A549 (cell line): ENCODE measurements at regions of chr2 and their contacts with region 1.

Region 1: DNA sequence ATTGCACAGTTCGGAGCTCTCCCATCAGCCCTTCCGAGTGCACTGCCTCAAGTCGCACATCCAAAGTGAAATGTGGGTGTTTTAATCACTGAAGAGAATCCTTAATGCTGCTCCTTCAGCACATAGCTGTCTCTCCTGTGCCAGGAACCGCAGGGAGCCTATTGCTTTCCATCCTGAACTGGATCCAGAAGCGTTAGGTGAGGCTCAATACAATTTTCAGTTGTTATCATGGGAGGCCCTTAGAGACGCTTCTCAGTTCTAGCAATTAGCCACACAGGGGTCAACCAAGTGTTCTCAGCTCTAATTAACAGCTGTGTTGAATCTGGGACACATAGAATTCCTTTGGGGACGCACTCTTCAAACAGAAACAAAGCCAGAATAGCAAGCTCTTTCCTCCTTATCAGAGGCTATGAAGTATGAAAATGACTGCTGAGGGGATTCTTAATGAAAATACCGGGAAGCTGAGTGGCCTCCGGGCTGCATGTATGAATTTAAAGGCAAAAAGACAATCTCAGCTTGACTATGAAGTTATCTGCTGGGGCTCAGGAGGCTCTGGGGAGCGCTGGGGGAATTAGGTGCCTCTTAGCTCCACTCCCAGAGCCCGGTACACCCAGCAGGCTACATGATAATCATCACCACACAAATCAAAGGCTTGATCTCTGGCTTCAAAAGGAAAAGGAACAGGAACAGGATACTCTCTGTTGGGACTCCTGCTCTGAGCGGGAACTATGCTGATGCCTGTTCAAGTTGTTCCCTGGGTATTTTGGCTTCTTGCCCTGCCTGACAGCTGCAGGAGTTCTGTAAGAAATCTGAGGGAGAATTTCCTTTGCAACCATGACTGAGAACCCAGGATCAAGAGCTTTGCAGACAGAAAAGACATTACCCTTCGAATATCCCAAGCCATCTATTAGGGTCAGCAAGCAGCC is 55.4 kb upstream of the NCOA1 start:
- DNase-seq: no peak
- ATAC-seq: peak in 1 of 2 experiments; percentile 30; a peak in 1 of 6 replicates
- H3K4me3 ChIP-seq: no peak overlapping the region
- H3K27ac ChIP-seq: no peak overlapping the region
- H3K4me1 ChIP-seq: no peaks in the 10 kb centered on the region
- CTCF ChIP-seq: no peak
- EP300 ChIP-seq: no peak
- POLR2A ChIP-seq: no peak
- RAD21 ChIP-seq: no peak

Region 2: DNA sequence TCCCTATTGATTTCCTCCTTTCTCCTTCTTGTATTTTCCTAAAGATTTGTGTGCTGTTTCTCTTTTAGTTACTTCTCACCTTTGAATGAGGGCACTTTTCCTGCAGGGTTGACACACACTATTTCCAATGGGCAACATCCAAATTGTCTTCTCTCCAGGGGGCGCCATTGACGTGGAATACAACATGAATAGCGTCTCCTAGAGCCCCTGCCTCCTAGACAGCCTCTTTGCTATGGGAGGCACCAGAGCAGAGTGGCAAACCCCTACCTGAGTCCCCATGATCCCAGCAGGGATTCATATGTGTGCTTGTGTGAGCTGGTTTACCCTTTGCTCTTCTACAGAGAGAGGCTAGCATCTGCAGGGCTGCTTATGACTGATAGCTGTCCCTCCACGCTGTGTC is 14.0 kb before region 1 on chr2:
- CTCF ChIA-PET with region 1: interaction called, 27 read pairs
- POLR2A ChIA-PET with region 1: no interaction called
- DNase-seq: peak; percentile 43 to 66
- ATAC-seq: peak; percentile 57 to 90
- H3K4me3 ChIP-seq: no peak overlapping the region
- H3K27ac ChIP-seq: no peak overlapping the region
- H3K4me1 ChIP-seq: no peaks in the 10 kb centered on the region
- CTCF ChIP-seq: peak; percentile 46; the same call in 2 of the 3 replicates
- EP300 ChIP-seq: no peak
- POLR2A ChIP-seq: no peak
- RAD21 ChIP-seq: peak; percentile 61 to 76